Heart left ventricle (tissue), 16 donors: ENCODE measurements at regions of chr19 and their contacts with region 1.

Region 1: DNA sequence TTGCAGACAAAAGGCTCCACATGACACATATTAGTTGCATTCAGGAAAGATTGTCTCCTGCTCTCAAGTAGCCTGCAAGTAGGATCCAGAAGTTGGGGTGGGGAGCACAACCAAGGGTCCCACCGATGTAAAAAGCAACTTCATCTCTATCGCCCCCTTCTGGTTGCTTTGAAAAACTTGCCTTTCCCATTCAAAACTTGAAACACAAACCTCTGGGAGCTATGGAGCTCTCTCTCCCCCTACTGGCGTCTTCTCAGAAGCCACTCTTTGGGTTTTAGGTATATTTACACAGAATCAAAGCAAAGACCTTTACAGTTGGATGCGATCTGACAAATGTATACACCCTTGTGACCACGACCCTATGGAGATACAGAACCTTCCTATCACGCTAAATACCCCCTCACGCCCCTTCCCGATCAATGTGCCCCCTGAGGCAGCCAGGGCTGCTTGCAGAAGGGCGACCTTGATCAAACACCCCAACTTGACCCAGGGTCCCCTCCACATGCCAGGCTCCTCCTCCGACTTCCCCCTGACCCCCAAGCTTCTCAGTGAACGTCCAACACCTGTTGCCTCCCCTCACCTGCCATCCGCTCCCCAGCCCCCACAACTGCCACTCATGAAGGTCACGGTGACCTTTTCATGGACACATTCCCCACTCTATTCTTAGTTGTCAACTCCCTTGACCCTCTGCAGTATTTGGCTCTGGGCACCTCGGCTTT is 10.1 kb downstream of the NOSIP start:
- DNase-seq: peak in 3 of 5 donors; percentile 42 to 59 (median 51)
- ATAC-seq: peak; percentile 75 to 81 (median 76)
- H3K4me3 ChIP-seq: peak overlapping the region in 1 of 12 donors; percentile 9
- H3K27ac ChIP-seq: peak overlapping the region; percentile 36 to 84 (median 68)
- H3K4me1 ChIP-seq: peaks cover 4 to 52% (median 20%) of the 10 kb centered on the region in 12 donors
- H3K27me3 ChIP-seq: no peaks in the 10 kb centered on the region
- CTCF ChIP-seq: peak; percentile 97 to 100 (median 98)
- POLR2A ChIP-seq: no peak

Region 2: DNA sequence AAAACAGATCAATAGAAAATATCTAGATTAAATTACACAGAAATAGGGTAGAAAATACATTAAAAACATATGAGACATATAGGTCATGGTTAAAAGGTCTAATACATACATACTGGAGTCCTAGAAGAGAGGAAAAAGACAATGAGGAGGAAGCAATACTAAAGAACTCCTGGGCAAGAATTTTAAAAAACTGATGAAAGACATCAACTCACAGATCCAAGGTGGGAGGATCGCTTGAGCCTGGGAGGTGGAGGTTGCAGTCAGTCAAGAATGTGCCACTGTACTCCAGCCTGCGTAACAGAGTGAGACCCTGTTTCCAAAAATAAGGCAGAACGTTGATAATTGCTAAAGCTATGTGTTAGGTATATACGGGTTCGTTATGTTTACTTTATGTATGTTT is 187.7 kb before region 1 on chr19:
- intact Hi-C with region 1: no loop called
- DNase-seq: no peak
- ATAC-seq: no peak
- H3K4me3 ChIP-seq: no peak overlapping the region
- H3K27ac ChIP-seq: no peak overlapping the region
- H3K4me1 ChIP-seq: no peaks in the 10 kb centered on the region
- H3K27me3 ChIP-seq: peaks cover 0 to 8% (median 0%) of the 10 kb centered on the region in 9 donors
- CTCF ChIP-seq: no peak
- POLR2A ChIP-seq: no peak

Region 3: GRCh38 chr19:49502866-49503581 is 67.3 kb before region 1 on chr19:
- intact Hi-C with region 1: loop called in 5 of 10 experiments (anchors 1 to 2 kb)
- DNase-seq: peak in 1 of 5 donors; percentile 49
- ATAC-seq: peak; percentile 16 to 61 (median 54)
- H3K4me3 ChIP-seq: no peak overlapping the region
- H3K27ac ChIP-seq: peak overlapping the region in 1 of 12 donors; percentile 48
- H3K4me1 ChIP-seq: peaks cover 5 to 51% (median 26%) of the 10 kb centered on the region in 12 donors
- H3K27me3 ChIP-seq: no peaks in the 10 kb centered on the region
- CTCF ChIP-seq: peak; percentile 47 to 81 (median 65)
- POLR2A ChIP-seq: no peak

Region 4: DNA sequence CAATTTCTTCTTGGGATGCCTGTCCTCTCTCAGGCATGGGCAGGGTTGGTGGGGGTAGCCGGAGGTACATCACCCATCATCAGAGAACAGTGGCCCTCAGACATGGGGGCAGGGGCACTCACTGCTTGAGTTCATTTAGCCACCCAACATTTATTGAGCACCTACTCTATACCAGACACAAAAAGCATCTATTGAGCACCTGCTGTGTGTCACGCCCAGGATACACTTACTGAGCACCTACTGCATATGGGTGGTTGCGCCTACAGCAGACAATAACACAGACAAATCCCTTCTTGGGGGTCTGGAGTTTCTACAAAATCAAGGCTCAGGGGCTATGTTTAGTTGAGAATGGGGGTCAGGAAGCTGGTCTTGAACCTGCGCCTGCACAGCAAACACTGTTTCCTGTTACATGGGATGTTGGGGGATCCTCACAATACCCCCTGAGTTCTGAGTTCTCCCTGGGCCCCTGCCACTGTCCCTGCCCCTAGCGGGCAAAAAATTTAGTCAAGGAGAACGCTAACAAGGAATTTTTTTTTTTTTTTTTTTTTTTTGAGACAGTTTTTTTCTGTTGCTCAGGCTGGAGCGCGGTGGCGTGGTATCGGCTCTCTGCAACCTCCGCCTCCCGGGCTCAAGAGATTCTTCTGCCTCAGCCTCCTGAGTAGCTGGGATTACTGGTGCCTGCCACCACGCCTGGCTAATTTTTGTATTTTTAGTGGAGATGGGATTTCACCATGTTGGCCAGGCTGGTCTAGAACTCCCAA is 30.9 kb before region 1 on chr19:
- intact Hi-C with region 1: no loop called
- DNase-seq: no peak
- ATAC-seq: no peak
- H3K4me3 ChIP-seq: no peak overlapping the region
- H3K27ac ChIP-seq: no peak overlapping the region
- H3K4me1 ChIP-seq: peaks cover 0 to 18% (median 2%) of the 10 kb centered on the region in 12 donors
- H3K27me3 ChIP-seq: no peaks in the 10 kb centered on the region
- CTCF ChIP-seq: no peak
- POLR2A ChIP-seq: no peak

Region 5: GRCh38 chr19:49580264-49581006 is 10.1 kb after region 1 on chr19 and contains the start of gene NOSIP:
- intact Hi-C with region 1: no loop called
- DNase-seq: peak; percentile 95 to 97 (median 96)
- ATAC-seq: peak; percentile 97 to 99 (median 98)
- H3K4me3 ChIP-seq: peak within 1 kb of the TSS; percentile 45 to 87 (median 72)
- H3K27ac ChIP-seq: peak within 1 kb of the TSS; percentile 60 to 89 (median 78)
- H3K4me1 ChIP-seq: peaks cover 0 to 32% (median 17%) of the 10 kb centered on the region in 12 donors
- H3K27me3 ChIP-seq: no peaks in the 10 kb centered on the region
- CTCF ChIP-seq: peak in 1 of 12 donors; percentile 23
- POLR2A ChIP-seq: peak; percentile 60 to 95
- total RNA-seq, gene NOSIP: 37.3 to 67.2 (median 46.3) TPM